MCF 10A (cell line): ENCODE measurements at regions of chr15 and their contacts with region 1.

Region 1: DNA sequence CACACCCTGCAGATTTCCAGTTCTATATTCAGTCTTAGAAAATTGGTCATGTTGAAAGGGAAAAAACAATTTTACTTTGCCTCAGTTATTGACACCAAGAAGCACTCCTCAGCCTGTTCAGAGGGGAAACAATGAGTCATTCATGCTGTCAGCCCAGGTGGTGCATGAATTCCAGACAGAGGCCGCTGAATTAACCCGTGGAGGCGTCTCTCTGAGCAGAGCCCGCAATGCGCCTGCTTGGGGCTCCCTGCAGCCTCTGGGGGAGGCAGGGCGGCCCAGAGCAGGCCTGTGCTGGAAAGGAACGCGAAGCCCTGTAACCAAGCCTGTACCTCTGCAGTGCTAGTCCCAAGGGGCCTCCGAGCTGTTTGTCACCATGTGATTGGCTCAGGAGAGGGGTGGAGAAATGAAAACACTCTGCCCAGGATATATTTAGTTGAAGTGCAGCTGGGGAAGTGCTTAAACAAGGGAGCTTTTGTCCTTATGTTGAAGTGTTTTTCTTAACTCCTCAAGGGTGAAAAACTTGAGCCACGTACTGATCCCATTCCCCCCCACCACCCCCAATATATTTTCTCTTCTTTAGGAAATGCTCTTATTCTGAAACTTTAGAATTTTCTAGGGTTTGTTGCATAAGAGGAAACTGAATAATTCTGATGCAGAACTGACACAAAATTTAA is 68.3 kb upstream of the CHD2 start:
- DNase-seq: peak; percentile 95
- H3K4me3 Mint-ChIP-seq: peak overlapping the region; percentile 60
- H3K27ac Mint-ChIP-seq: peak overlapping the region; percentile 95
- H3K4me1 Mint-ChIP-seq: peaks cover 5% of the 10 kb centered on the region
- H3K27me3 Mint-ChIP-seq: no peaks in the 10 kb centered on the region
- CTCF ChIP-seq: no peak

Region 2: GRCh38 chr15:92803847-92804609 is 27.8 kb before region 1 on chr15:
- CTCF ChIA-PET with region 1: interaction called, 6 read pairs
- POLR2A ChIA-PET with region 1: interaction called, 204 read pairs
- intact Hi-C with region 1: no loop called
- DNase-seq: peak; percentile 100
- H3K4me3 Mint-ChIP-seq: peak overlapping the region; percentile 1
- H3K27ac Mint-ChIP-seq: peak overlapping the region; percentile 98
- H3K4me1 Mint-ChIP-seq: peaks cover 34% of the 10 kb centered on the region
- H3K27me3 Mint-ChIP-seq: no peaks in the 10 kb centered on the region
- CTCF ChIP-seq: no peak

Region 3: GRCh38 chr15:92845126-92845508 is 13.3 kb after region 1 on chr15:
- CTCF ChIA-PET with region 1: no interaction called
- POLR2A ChIA-PET with region 1: interaction called, 14 read pairs
- intact Hi-C with region 1: no loop called
- DNase-seq: peak; percentile 42
- H3K4me3 Mint-ChIP-seq: no peak overlapping the region
- H3K27ac Mint-ChIP-seq: peak overlapping the region; percentile 2
- H3K4me1 Mint-ChIP-seq: peaks cover 6% of the 10 kb centered on the region
- H3K27me3 Mint-ChIP-seq: no peaks in the 10 kb centered on the region
- CTCF ChIP-seq: no peak

Region 4: DNA sequence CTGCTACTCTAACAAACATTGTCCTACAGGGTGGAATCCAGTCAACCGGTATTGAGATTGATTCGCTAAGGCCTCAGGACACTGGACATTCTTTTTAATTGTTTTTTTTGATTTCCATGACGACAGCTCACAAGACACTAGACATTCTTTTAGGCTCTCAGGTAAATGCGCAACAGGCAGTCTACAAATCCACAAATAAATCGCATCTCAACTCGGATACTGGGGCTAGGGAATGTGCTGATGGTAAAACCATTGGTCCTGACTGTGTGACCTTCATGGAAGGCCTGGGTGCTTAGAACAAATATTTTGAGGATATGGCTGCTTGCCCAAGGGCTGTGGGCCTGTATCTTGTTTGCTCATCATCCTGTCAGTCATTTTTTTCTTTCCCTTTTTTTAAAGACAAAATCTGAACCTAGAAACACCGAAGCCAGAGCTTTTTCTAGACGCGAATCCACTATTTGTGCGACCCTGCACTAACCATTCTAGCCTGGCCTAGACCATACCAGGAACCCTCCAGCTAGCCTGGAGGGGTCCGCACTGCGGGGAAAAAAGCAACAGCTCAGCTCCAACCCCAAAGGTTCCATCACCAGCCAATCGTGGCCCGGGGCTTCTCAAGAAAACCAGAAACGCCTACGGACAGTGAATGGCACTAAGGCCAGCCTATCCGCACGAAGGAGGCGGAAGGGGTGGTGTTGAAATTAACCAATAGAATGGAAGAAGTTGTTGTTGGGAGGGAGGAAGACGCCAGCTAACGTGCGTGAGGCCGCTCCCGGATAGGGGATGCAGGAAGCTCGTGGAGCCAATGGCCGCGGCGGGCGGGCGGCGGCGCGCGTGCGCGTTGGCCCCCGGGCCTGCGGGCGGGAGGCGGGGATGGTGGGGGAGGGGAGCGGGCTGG is 50.3 kb after region 1 on chr15:
- CTCF ChIA-PET with region 1: interaction called, 7 read pairs
- POLR2A ChIA-PET with region 1: interaction called, 299 read pairs
- intact Hi-C with region 1: no loop called
- DNase-seq: peak; percentile 99
- H3K4me3 Mint-ChIP-seq: peak overlapping the region; percentile 87
- H3K27ac Mint-ChIP-seq: peak overlapping the region; percentile 98
- H3K4me1 Mint-ChIP-seq: peaks cover 28% of the 10 kb centered on the region
- H3K27me3 Mint-ChIP-seq: no peaks in the 10 kb centered on the region
- CTCF ChIP-seq: no peak

Region 5: GRCh38 chr15:92896561-92896960 is 64.8 kb after region 1 on chr15:
- CTCF ChIA-PET with region 1: interaction called, 3 read pairs
- POLR2A ChIA-PET with region 1: interaction called, 108 read pairs
- intact Hi-C with region 1: no loop called
- DNase-seq: no peak
- H3K4me3 Mint-ChIP-seq: no peak overlapping the region
- H3K27ac Mint-ChIP-seq: peak overlapping the region; percentile 57
- H3K4me1 Mint-ChIP-seq: peaks cover 24% of the 10 kb centered on the region
- H3K27me3 Mint-ChIP-seq: no peaks in the 10 kb centered on the region
- CTCF ChIP-seq: no peak

Region 6: DNA sequence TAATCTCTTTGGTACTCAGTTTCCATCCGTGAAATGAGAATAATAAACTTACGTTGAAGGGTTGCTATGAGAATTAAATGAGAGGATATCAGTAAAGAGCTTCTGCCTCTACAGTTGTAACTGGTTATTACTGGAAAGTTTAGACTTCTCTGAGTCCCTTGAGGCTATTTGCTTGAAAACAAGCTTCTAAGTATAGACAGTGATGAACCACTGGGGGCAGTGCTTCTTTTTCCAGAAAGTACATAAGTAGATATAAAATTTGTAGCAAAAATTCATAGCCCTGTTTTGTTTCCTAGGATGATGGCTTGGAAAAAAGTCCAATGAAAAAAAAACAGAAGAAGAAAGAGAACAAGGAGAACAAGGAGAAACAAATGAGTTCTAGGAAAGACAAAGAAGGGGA is 170.1 kb after region 1 on chr15:
- CTCF ChIA-PET with region 1: no interaction called
- POLR2A ChIA-PET with region 1: no interaction called
- intact Hi-C with region 1: no loop called
- DNase-seq: no peak
- H3K4me3 Mint-ChIP-seq: no peak overlapping the region
- H3K27ac Mint-ChIP-seq: no peak overlapping the region
- H3K4me1 Mint-ChIP-seq: peaks cover 9% of the 10 kb centered on the region
- H3K27me3 Mint-ChIP-seq: no peaks in the 10 kb centered on the region
- CTCF ChIP-seq: no peak

Region 7: DNA sequence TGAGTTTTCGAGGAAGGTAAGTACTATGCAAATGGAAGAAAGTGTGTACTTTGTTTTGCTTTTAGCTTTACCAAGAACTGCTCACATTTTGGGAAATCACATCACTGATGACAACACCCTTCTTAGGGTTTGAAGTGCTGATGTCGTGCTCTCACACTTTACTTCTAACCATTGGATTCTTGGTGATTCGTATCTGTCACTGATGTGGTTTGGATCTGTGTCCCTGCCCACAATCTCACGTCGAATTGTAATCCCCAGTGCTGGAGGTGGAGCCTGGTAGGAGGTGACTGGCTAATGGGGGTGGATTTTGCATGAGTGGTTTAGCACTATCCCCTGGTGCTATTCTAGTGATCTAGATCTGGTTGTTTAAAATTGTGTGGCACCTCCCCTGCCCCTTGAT is 332.6 kb after region 1 on chr15:
- CTCF ChIA-PET with region 1: no interaction called
- POLR2A ChIA-PET with region 1: no interaction called
- intact Hi-C with region 1: no loop called
- DNase-seq: no peak
- H3K4me3 Mint-ChIP-seq: no peak overlapping the region
- H3K27ac Mint-ChIP-seq: no peak overlapping the region
- H3K4me1 Mint-ChIP-seq: peaks cover 9% of the 10 kb centered on the region
- H3K27me3 Mint-ChIP-seq: peaks cover 18% of the 10 kb centered on the region
- CTCF ChIP-seq: no peak

Region 8: DNA sequence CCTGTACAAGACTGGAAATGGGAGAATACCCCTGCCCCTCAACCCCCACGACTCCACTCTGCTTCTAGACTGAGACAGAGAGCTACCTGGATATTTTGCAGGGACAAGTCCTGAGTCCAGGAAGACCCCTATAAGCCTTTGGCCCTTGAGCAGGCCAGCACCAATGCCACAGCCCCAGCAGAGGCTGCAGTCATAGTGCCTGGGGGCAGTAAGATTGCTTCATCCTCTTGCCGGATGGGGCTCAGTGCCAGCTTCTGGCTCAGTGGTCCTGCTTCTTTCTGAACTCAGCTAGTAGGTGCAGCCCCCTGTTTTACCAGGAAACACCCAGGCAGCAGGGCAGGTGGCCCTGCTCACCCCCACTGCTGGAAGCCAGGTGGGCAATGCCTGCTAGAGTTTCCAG is 981.2 kb after region 1 on chr15:
- CTCF ChIA-PET with region 1: no interaction called
- POLR2A ChIA-PET with region 1: no interaction called
- intact Hi-C with region 1: no loop called
- DNase-seq: peak; percentile 34
- H3K4me3 Mint-ChIP-seq: no peak overlapping the region
- H3K27ac Mint-ChIP-seq: no peak overlapping the region
- H3K4me1 Mint-ChIP-seq: peaks cover 11% of the 10 kb centered on the region
- H3K27me3 Mint-ChIP-seq: no peaks in the 10 kb centered on the region
- CTCF ChIP-seq: no peak